Dendritic cell treated with granulocyte-macrophage colony-stimulating factor and Interleukin-4, amounts not matched to agents 40 ng/mL and 50 ng/mL, for 4 days (primary cell): ENCODE measurements at regions of chr1 and their contacts with region 1.

Region 1: GRCh38 chr1:9816199-9816598 is 7.6 kb downstream of the CLSTN1 start:
- H3K4me3 Mint-ChIP-seq: no peak overlapping the region
- H3K27ac Mint-ChIP-seq: no peak overlapping the region
- H3K4me1 Mint-ChIP-seq: peaks cover 31% of the 10 kb centered on the region
- H3K27me3 Mint-ChIP-seq: no peaks in the 10 kb centered on the region

Region 2: DNA sequence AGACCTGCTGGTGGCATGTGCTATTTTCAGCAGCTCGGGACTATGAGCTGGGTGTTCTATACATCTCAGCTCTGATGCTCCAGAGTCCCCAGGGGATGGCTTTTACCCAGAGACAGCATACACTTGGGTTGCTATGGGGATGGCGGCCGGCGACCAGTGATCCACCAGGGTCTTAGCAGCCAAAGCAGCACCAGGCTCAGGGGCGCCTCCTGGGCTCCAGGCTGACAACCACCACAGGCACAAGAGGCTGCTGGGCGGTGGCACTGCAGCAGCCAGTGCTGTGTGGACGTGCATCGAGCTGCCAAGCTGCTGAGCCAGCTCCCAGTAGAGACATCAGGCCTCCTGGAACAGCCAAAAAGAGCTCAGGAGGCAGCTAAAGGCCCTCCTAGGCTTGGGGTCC is 45.2 kb after region 1 on chr1:
- intact Hi-C with region 1: loop called (anchors 5 kb)
- H3K4me3 Mint-ChIP-seq: no peak overlapping the region
- H3K27ac Mint-ChIP-seq: no peak overlapping the region
- H3K4me1 Mint-ChIP-seq: peaks cover 39% of the 10 kb centered on the region
- H3K27me3 Mint-ChIP-seq: no peaks in the 10 kb centered on the region